Transverse colon (tissue), 4 donors: ENCODE measurements at regions of chr19 and their contacts with region 1.

Region 1: GRCh38 chr19:19914596-19914995 is 13.8 kb downstream of the ZNF93 start:
- DNase-seq: no peak
- H3K4me3 ChIP-seq: no peak overlapping the region
- H3K27ac ChIP-seq: no peak overlapping the region
- H3K4me1 ChIP-seq: no peaks in the 10 kb centered on the region
- H3K27me3 ChIP-seq: no peaks in the 10 kb centered on the region
- CTCF ChIP-seq: no peak
- EP300 ChIP-seq: no peak
- POLR2A ChIP-seq: no peak

Region 2: DNA sequence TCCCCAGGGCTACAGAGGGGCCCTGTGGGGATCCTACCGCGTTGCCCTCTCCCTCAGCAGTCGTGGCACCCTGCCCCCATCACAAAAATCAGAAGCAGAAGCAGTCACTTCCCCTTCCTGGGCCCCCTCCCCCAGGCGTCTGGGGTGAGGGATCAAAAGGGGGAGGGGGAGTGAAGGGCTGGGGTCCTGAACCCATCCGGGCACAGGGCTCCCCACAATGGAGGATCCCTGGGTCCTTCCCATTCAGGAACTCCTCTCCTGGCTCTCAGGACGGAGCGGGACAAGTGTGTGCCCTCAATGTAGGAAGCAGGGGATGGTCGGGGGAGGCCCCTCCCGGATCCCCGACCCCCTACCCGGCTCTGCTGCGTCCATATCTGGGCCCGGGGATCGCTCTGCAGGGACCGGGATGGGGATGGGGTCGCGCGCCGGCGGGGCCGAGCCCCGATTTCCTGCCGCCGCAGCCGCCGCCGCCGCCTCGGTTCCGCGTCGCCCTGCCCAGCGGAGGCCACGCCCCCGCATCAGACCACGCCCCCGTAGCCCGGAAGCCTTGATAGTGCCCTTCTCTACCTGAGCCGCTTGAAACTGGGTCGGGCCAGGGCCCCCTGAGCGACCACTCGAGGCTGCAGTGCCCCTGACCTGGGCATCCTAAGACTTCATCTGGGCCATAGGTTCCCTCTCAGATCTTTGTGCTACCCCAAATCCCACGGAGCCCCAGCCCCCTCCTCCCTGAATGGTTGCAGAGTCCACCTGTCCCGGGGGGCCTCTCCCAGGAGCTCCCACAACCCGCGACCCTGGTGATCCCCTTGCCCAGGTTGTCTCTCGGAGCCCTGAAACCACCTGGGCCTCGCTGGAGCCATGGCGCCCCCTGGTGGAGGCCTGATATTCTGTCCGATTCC is 271.2 kb before region 1 on chr19 and contains the start of gene GMIP:
- in situ Hi-C with region 1: no loop called
- intact Hi-C with region 1: no loop called
- DNase-seq: peak; percentile 91
- H3K4me3 ChIP-seq: peak within 1 kb of the TSS; percentile 38 to 86 (median 81)
- H3K27ac ChIP-seq: peak within 1 kb of the TSS; percentile 81 to 88 (median 84)
- H3K4me1 ChIP-seq: peaks cover 0 to 10% (median 5%) of the 10 kb centered on the region in 4 donors
- H3K27me3 ChIP-seq: no peaks in the 10 kb centered on the region
- CTCF ChIP-seq: peak; percentile 90 to 96 (median 93)
- EP300 ChIP-seq: no peak
- POLR2A ChIP-seq: peak; percentile 69
- total RNA-seq, gene GMIP: 17.3 to 84.9 (median 27.2) TPM

Region 3: DNA sequence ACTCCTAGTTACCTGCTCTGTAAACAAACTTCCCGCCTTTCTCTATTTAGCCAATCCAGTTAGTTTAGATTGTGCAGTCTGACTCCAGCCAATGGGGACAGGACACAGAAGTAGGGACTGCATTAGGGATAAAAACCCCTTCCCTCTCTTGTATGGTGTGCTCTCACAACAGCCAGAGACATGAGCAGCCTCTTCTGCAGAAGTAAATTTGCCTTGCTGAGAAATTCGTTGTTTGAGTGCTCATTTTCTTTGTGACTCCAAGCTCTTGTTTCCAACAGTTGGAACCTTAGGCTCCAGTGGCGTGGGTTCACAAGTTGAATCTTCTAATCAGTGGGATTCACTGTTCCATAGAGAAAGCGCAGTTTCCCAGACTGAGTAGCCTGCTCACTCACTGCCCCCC is 52.3 kb after region 1 on chr19:
- in situ Hi-C with region 1: no loop called
- intact Hi-C with region 1: loop called (anchors 2 kb)
- DNase-seq: no peak
- H3K4me3 ChIP-seq: no peak overlapping the region
- H3K27ac ChIP-seq: no peak overlapping the region
- H3K4me1 ChIP-seq: no peaks in the 10 kb centered on the region
- H3K27me3 ChIP-seq: no peaks in the 10 kb centered on the region
- CTCF ChIP-seq: no peak
- EP300 ChIP-seq: no peak
- POLR2A ChIP-seq: no peak

Region 4: GRCh38 chr19:20077791-20078463 is 163.3 kb after region 1 on chr19 and contains the start of gene ZNF90:
- in situ Hi-C with region 1: no loop called
- intact Hi-C with region 1: no loop called
- DNase-seq: peak; percentile 92
- H3K4me3 ChIP-seq: peak within 1 kb of the TSS; percentile 40 to 60 (median 54)
- H3K27ac ChIP-seq: peak within 1 kb of the TSS; percentile 60 to 76 (median 72)
- H3K4me1 ChIP-seq: peaks cover 0 to 12% (median 6%) of the 10 kb centered on the region in 4 donors
- H3K27me3 ChIP-seq: no peaks in the 10 kb centered on the region
- CTCF ChIP-seq: no peak
- EP300 ChIP-seq: no peak
- POLR2A ChIP-seq: no peak
- total RNA-seq, gene ZNF90: 3.4 to 24.5 (median 7.0) TPM